ENCODE measurements at regions of chr15 and their contacts with region 1.

Region 1: GRCh38 chr15:101008158-101009139 is 89.3 kb downstream of the LRRK1 start:
- DNase-seq: peak; percentile 92
- H3K4me3 Mint-ChIP-seq: peak overlapping the region; percentile 81
- H3K27ac Mint-ChIP-seq: no peak overlapping the region
- H3K4me1 Mint-ChIP-seq: peaks cover 18% of the 10 kb centered on the region
- H3K27me3 Mint-ChIP-seq: peaks cover 3% of the 10 kb centered on the region

Region 2: DNA sequence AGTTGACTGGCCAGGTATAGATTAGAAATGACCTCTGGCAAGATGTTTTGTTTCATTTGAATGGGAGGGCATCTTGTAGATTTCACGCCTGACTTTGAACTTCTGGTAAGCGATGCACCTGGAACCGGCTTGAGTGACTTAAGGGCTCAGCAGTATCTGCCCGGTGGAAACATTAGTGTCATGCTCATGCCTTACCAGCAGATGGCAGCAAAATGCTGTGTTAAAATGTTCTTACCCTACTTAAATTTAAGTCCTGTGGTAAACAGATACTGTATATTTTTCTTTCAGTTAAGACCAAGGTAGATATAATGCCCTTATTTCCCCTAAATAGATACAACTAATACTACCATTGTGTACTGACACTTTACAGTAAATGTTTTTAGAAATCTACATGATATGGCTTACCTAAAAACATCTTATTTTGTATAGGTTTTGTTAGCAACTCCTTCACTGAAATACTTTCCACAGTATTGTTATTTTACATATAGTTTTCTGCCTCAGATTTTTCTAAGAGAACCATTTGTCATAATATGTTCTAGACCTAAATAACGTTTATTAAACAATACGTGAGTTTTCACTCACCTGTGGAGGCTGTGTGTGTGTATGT is 380.6 kb before region 1 on chr15:
- CTCF ChIA-PET with region 1: interaction called, 5 read pairs
- intact Hi-C with region 1: loop called (anchors 1 kb)
- DNase-seq: peak; percentile 79
- H3K4me3 Mint-ChIP-seq: no peak overlapping the region
- H3K27ac Mint-ChIP-seq: no peak overlapping the region
- H3K4me1 Mint-ChIP-seq: peaks cover 15% of the 10 kb centered on the region
- H3K27me3 Mint-ChIP-seq: no peaks in the 10 kb centered on the region

Region 3: DNA sequence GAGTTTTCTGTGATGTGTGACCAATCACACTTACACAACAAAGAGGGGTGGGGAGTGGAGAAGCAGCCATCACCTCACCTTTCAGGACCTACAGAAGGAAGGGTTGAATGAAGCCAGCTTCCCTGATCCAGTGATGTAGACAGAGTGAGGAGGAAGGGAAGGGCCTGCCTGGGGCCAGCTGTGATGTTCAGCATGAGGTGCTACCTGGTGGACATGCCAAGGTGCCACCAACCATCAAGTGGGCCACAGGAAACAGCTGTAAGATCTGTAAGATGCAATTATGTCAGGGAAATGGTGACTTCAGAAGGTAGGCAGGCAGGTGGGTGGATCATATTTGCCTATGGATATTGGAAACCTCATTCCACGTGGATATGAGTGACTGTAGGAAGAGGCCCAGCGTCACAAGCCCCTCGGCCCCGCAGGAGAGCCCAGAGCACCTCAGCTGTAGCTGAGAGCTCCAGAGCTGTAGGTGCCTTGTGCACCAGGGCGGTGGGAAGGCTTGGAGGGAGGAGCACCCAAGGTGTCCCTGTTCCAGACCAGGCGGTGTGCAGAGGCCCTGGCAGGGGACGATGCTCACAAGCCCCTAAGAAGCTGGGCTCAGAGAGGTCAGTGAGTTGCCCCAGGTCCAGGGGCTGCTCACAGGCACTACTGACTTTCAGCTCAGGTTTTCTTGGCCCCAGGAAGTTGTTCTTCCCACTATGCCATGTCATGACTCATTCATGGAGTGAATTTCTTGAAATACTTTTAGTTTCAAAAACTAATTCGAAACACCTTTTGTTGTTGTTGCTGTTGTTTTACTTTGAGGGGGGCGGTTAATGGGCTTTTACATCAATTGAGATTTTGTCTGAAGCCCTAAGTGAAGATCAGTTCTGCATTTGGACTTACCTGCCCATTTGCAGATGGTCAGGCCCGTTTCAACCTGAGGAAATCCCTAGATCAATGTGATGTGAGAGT is 223.0 kb before region 1 on chr15:
- CTCF ChIA-PET with region 1: no interaction called
- intact Hi-C with region 1: no loop called
- DNase-seq: no peak
- H3K4me3 Mint-ChIP-seq: no peak overlapping the region
- H3K27ac Mint-ChIP-seq: no peak overlapping the region
- H3K4me1 Mint-ChIP-seq: no peaks in the 10 kb centered on the region
- H3K27me3 Mint-ChIP-seq: peaks cover 5% of the 10 kb centered on the region

Region 4: DNA sequence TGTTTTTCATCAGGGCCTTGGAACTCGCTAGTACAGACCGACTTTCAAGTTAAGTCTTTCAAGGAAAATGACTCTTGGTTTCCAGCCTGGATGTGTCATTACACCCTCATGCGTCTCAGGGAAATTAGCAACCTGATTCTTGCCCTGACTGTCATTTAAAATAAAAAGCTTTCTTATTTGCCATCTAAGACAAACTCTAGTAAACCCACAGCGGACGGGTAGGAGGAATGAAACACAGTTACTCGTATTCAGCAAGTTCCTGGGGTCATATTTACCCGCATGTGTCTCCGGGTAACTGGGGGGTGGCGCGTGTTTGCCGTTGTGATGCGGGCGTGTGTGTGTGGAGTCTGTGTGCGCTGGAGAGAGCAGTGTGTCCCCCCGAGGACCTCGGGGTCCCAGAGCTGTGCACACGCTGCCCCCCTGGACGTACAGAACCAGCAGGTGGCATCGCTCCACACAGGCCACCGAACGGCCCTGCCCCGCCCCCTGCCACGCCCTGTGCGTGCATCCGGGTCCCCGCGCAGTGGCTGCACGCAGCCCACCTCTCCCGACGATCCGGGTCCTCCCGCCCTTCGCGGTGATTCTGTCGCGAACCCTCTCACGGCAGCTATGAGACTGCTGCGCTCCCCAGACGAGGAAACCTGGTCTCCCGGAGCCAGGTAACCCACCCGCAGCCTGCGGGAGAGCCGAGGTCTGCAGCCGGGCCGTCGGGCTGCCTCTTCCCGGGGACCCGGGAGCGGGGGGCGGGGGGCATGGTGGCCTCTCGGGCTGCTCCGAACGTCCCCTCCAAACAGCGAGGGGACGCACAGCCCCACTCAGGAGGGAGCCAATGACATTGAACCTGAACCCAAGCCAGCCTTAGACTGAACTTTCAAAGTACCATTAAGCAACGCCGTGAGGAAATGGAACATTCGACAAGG is 158.9 kb before region 1 on chr15:
- CTCF ChIA-PET with region 1: interaction called, 4 read pairs
- intact Hi-C with region 1: loop called (anchors 1 kb)
- DNase-seq: peak; percentile 59
- H3K4me3 Mint-ChIP-seq: peak overlapping the region; percentile 74
- H3K27ac Mint-ChIP-seq: no peak overlapping the region
- H3K4me1 Mint-ChIP-seq: peaks cover 6% of the 10 kb centered on the region
- H3K27me3 Mint-ChIP-seq: peaks cover 9% of the 10 kb centered on the region

Region 5: DNA sequence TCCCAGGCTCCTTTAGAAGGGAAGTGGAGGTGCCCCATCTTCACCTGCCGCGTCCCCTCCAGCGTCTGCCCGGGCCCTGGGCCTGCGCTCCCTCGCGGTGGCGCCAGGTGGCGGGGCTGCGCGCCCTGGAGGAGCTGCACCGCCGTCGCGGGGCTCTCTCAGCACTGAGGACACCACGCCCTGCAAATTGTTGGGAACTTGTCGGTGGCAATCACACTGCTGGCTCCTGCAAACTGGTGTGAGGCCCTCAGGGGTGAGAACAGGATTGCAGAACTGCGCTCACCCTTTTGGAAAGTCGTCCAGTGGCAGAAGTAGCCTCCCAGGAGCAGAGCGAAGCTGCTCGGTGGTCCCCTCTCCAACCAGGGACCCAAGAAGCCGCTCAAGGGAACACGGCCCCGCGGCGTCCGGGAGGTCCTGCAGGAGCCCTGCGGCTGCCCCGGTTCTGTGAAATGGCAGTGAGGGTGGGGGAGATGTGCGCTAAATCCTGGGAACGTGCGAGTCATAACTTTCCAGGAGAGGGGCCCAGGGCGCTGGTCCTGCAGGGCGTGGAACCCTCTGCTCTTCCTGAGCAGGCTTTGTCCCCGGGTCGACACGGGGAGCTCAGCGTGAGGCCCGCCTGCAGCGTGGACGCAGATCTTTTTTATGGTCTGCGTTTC is 90.3 kb before region 1 on chr15:
- CTCF ChIA-PET with region 1: interaction called, 209 read pairs
- intact Hi-C with region 1: loop called (anchors 2 kb)
- DNase-seq: peak; percentile 73
- H3K4me3 Mint-ChIP-seq: peak overlapping the region; percentile 74
- H3K27ac Mint-ChIP-seq: no peak overlapping the region
- H3K4me1 Mint-ChIP-seq: peaks cover 19% of the 10 kb centered on the region
- H3K27me3 Mint-ChIP-seq: peaks cover 64% of the 10 kb centered on the region

Region 6: DNA sequence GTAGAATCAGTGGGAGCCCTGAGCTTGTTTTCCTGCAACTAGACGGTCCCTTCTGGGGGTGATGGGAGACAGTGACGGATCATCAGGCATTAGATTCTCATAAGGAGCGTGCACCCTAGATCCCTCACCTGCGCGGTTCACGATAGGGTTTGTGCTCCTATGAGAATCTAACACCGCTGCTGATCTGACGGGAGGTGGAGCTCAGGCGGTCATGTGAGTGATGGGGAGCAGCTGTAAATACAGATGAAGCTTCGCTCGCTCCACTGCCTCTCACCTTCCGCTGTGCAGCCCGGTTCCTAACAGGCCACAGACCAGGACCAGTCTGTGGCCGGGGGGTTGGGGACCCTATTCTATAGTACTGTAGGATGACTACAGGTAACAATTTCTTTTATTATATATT is 88.7 kb after region 1 on chr15:
- CTCF ChIA-PET with region 1: no interaction called
- intact Hi-C with region 1: no loop called
- DNase-seq: no peak
- H3K4me3 Mint-ChIP-seq: no peak overlapping the region
- H3K27ac Mint-ChIP-seq: no peak overlapping the region
- H3K4me1 Mint-ChIP-seq: no peaks in the 10 kb centered on the region
- H3K27me3 Mint-ChIP-seq: no peaks in the 10 kb centered on the region

Region 7: GRCh38 chr15:101258238-101259144 is 250.0 kb after region 1 on chr15:
- CTCF ChIA-PET with region 1: interaction called, 19 read pairs
- intact Hi-C with region 1: no loop called
- DNase-seq: peak; percentile 73
- H3K4me3 Mint-ChIP-seq: no peak overlapping the region
- H3K27ac Mint-ChIP-seq: no peak overlapping the region
- H3K4me1 Mint-ChIP-seq: peaks cover 19% of the 10 kb centered on the region
- H3K27me3 Mint-ChIP-seq: peaks cover 6% of the 10 kb centered on the region